Naive thymus-derived CD4-positive, alpha-beta T cell (primary cell): ENCODE measurements at regions of chr4 and their contacts with region 1.

Region 1: DNA sequence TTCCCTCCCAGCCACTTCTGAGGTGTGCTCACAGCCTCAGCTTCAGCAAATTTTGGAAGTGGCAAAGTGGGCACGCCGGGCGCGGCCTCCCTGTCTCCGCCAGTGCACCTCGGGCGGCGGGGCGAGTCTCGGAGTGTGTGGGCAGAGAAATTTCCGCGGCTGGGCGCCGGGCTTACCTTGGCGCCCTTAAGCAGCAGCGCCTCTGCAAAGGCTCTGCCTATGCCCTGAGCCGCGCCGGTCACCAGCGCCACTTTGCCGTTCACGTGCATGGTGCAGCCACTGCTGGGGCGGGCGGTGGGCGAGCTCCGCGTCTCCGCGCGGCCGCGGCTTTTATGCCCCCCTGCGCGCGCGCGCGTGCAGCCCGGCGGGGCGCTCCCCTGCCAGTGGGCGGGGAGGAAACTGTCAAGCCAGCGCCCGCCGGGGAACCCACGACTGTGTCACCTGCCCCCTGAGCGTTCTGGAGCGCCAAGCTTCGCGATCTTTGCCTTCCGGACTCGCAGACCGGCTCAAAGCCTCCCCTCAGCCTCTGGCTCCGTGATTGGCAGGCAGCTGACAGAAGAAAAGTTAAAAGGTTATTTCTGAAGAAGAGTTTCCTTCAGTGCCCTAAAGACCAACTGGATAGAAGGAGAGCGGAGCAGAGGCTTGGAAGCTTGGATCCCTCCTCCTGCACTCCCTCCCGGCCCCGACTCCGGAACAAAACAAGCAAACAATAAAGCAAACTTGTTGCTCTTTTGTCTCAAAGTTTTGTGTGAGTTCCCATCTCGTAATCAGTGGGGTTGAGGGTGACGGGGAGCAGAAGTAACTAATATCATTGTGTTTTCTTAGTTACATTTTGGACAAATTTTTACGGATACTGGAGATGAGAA is at the start of gene HPGD:
- DNase-seq: peak; percentile 33 to 79 (median 67)
- ATAC-seq: peak; percentile 90
- H3K4me3 ChIP-seq: peak within 1 kb of the TSS; percentile 66
- H3K4me3 Mint-ChIP-seq: peak within 1 kb of the TSS; percentile 77 to 91 (median 88)
- H3K27ac ChIP-seq: peak within 1 kb of the TSS; percentile 38
- H3K27ac Mint-ChIP-seq: peak within 1 kb of the TSS in 7 of 9 donors; percentile 6 to 93 (median 86)
- H3K4me1 ChIP-seq: peaks cover 0 to 5% of the 10 kb centered on the region in 2 donors
- H3K4me1 Mint-ChIP-seq: peaks cover 0 to 45% (median 17%) of the 10 kb centered on the region in 7 donors
- H3K27me3 ChIP-seq: peaks cover 0 to 4% of the 10 kb centered on the region in 2 donors
- H3K27me3 Mint-ChIP-seq: peaks cover 23 to 52% (median 38%) of the 10 kb centered on the region in 5 donors
- total RNA-seq, gene HPGD: 2.5 to 13.5 (median 4.6) TPM

Region 2: DNA sequence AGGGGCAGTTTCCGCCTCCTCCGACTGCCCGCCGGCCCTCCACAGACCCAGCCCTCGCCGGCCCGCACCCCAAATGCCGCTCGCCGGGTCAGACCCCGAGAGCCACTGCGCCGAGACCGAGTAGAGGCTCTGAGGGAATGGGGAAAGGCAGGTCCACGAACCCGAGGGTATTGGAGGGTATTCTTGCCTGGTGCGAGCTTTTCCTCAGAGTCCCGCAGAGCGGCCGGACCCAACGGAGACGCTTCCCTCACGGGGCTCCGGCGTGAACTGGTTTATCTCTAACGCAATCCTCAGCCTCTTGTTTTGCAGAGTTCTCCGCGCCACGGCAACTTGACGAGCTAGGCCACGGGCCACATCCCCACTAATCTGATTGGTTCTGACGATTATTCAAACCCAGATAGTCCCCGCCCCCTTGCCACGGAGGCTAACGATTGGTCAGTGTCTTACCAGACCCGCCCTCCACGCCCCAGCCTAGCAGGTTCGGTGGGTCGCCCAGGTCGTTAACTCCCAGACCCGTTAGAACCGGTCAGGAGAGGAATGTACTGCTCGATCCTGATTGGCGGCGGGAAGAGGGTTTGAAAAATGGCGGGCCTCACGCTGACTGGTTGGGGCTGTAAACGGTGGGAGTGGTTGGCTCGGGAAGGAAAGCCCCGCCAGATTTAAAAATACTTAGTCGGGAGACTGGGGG is 1188.2 kb before region 1 on chr4 and contains the start of gene HMGB2:
- CTCF ChIA-PET with region 1: no interaction called
- POLR2A ChIA-PET with region 1: no interaction called
- intact Hi-C with region 1: loop called in 1 of 2 experiments (anchors 5 kb)
- DNase-seq: peak; percentile 96 to 100 (median 100)
- ATAC-seq: peak; percentile 97
- H3K4me3 ChIP-seq: peak within 1 kb of the TSS; percentile 89
- H3K4me3 Mint-ChIP-seq: peak within 1 kb of the TSS; percentile 93 to 100 (median 99)
- H3K27ac ChIP-seq: peak within 1 kb of the TSS; percentile 98
- H3K27ac Mint-ChIP-seq: peak within 1 kb of the TSS; percentile 97 to 100 (median 99)
- H3K4me1 ChIP-seq: peaks cover 7 to 18% of the 10 kb centered on the region in 2 donors
- H3K4me1 Mint-ChIP-seq: peaks cover 20 to 55% (median 30%) of the 10 kb centered on the region in 7 donors
- H3K27me3 ChIP-seq: no peaks in the 10 kb centered on the region
- H3K27me3 Mint-ChIP-seq: peaks cover 6 to 18% (median 11%) of the 10 kb centered on the region in 5 donors
- total RNA-seq, gene HMGB2: 89.3 to 542 (median 106) TPM

Region 3: DNA sequence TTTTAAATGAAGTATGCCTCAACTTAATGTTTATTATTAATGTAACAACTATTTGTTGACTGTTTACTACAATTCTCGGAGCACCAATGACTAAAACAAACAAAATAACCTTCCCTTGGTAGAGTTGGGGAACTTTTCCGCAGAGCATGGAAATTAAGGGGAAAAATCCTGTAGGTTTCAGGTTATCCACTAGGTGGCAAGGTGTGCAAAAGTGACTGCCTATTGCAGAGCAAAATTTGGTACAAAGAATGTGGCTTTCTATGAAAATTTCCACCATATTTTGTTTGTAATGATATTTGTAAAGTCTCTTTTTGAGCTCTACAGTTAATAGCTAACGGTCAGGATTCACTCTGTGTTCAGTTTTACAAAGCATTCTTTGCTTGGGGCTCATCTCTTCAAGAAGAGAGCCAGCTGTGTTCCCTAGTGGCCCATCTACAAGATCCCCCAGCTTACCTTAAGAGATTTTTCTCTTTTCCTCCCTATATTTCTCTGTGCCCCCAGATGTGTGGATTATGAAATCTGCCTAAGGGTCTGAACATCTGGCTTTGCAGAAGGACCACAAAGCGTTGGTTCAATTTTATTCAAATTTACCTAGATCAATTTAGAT is 300.0 kb before region 1 on chr4:
- CTCF ChIA-PET with region 1: no interaction called
- POLR2A ChIA-PET with region 1: no interaction called
- intact Hi-C with region 1: loop called in 1 of 2 experiments (anchors 5 kb)
- DNase-seq: peak in 3 of 9 donors; percentile 22 to 33 (median 25)
- ATAC-seq: peak; percentile 64
- H3K4me3 ChIP-seq: no peak overlapping the region
- H3K4me3 Mint-ChIP-seq: no peak overlapping the region
- H3K27ac ChIP-seq: no peak overlapping the region
- H3K27ac Mint-ChIP-seq: no peak overlapping the region
- H3K4me1 ChIP-seq: peaks cover 5% of the 10 kb centered on the region in 2 donors
- H3K4me1 Mint-ChIP-seq: peaks cover 7 to 11% (median 8%) of the 10 kb centered on the region in 7 donors
- H3K27me3 ChIP-seq: peaks cover 0 to 15% of the 10 kb centered on the region in 2 donors
- H3K27me3 Mint-ChIP-seq: peaks cover 43 to 69% (median 63%) of the 10 kb centered on the region in 5 donors

Region 4: DNA sequence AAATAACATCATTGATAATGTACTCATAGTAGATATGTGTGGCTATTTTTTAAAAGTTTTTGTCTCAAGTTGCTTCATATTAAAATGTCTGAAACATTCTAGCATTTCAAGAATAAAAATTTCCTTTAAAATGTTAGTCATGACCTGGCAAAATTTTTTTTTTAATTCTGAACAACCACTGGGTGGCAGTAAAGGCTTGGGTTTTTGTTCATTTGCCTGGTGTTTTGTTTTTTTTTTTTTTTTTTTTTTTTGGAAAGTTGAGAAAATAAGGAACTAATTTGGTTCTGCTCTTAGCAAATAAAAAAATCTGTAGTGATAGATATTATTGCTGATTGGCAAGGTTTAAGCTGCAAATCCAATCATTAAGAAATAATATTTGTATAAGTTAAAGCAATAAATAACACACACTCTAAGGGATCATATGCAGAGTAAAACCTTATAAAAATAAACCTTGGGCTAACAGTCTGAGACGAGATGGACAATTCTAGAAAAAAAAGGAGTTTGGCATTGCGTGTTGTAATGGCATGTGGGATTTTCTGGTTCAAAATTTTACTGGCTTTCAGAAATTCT is 157.3 kb before region 1 on chr4:
- CTCF ChIA-PET with region 1: no interaction called
- POLR2A ChIA-PET with region 1: no interaction called
- intact Hi-C with region 1: loop called in 1 of 2 experiments (anchors 2 kb)
- DNase-seq: peak in 5 of 9 donors; percentile 2 to 31 (median 15)
- ATAC-seq: no peak
- H3K4me3 ChIP-seq: no peak overlapping the region
- H3K4me3 Mint-ChIP-seq: no peak overlapping the region
- H3K27ac ChIP-seq: no peak overlapping the region
- H3K27ac Mint-ChIP-seq: no peak overlapping the region
- H3K4me1 ChIP-seq: no peaks in the 10 kb centered on the region
- H3K4me1 Mint-ChIP-seq: no peaks in the 10 kb centered on the region
- H3K27me3 ChIP-seq: peaks cover 0 to 2% of the 10 kb centered on the region in 2 donors
- H3K27me3 Mint-ChIP-seq: peaks cover 0 to 16% (median 0%) of the 10 kb centered on the region in 5 donors

Region 5: GRCh38 chr4:174496631-174497432 is 25.6 kb before region 1 on chr4:
- CTCF ChIA-PET with region 1: no interaction called
- POLR2A ChIA-PET with region 1: no interaction called
- intact Hi-C with region 1: loop called (anchors 1 kb)
- DNase-seq: peak in 3 of 9 donors; percentile 9 to 15 (median 12)
- ATAC-seq: no peak
- H3K4me3 ChIP-seq: no peak overlapping the region
- H3K4me3 Mint-ChIP-seq: peak overlapping the region in 9 of 10 donors; percentile 24 to 82 (median 63)
- H3K27ac ChIP-seq: no peak overlapping the region
- H3K27ac Mint-ChIP-seq: peak overlapping the region in 5 of 9 donors; percentile 4 to 94 (median 66)
- H3K4me1 ChIP-seq: no peaks in the 10 kb centered on the region
- H3K4me1 Mint-ChIP-seq: peaks cover 0 to 27% (median 12%) of the 10 kb centered on the region in 7 donors
- H3K27me3 ChIP-seq: no peaks in the 10 kb centered on the region
- H3K27me3 Mint-ChIP-seq: no peaks in the 10 kb centered on the region

Region 6: GRCh38 chr4:174631901-174632758 is 109.7 kb after region 1 on chr4:
- CTCF ChIA-PET with region 1: no interaction called
- POLR2A ChIA-PET with region 1: no interaction called
- intact Hi-C with region 1: loop called (anchors 1 to 2 kb)
- DNase-seq: peak in 4 of 9 donors; percentile 16 to 35 (median 27)
- ATAC-seq: peak; percentile 60
- H3K4me3 ChIP-seq: no peak overlapping the region
- H3K4me3 Mint-ChIP-seq: no peak overlapping the region
- H3K27ac ChIP-seq: no peak overlapping the region
- H3K27ac Mint-ChIP-seq: no peak overlapping the region
- H3K4me1 ChIP-seq: no peaks in the 10 kb centered on the region
- H3K4me1 Mint-ChIP-seq: peaks cover 0 to 4% (median 0%) of the 10 kb centered on the region in 7 donors
- H3K27me3 ChIP-seq: no peaks in the 10 kb centered on the region
- H3K27me3 Mint-ChIP-seq: peaks cover 0 to 2% (median 0%) of the 10 kb centered on the region in 5 donors

Region 7: GRCh38 chr4:174696657-174697056 is 174.2 kb after region 1 on chr4:
- CTCF ChIA-PET with region 1: no interaction called
- POLR2A ChIA-PET with region 1: no interaction called
- intact Hi-C with region 1: no loop called
- DNase-seq: no peak
- ATAC-seq: no peak
- H3K4me3 ChIP-seq: no peak overlapping the region
- H3K4me3 Mint-ChIP-seq: no peak overlapping the region
- H3K27ac ChIP-seq: no peak overlapping the region
- H3K27ac Mint-ChIP-seq: no peak overlapping the region
- H3K4me1 ChIP-seq: no peaks in the 10 kb centered on the region
- H3K4me1 Mint-ChIP-seq: no peaks in the 10 kb centered on the region
- H3K27me3 ChIP-seq: no peaks in the 10 kb centered on the region
- H3K27me3 Mint-ChIP-seq: peaks cover 0 to 11% (median 0%) of the 10 kb centered on the region in 5 donors